Caco-2 (cell line): ENCODE measurements at regions of chr7 and their contacts with region 1.

Region 1: GRCh38 chr7:82044497-82045080 is 274.7 kb upstream of the HGF start:
- DNase-seq: peak in 1 of 2 experiments; percentile 42
- H3K4me3 ChIP-seq: no peak overlapping the region
- H3K4me3 Mint-ChIP-seq: no peak overlapping the region
- H3K27ac Mint-ChIP-seq: no peak overlapping the region
- H3K4me1 ChIP-seq: peaks cover 4% of the 10 kb centered on the region
- H3K4me1 Mint-ChIP-seq: peaks cover 6% of the 10 kb centered on the region
- H3K27me3 ChIP-seq: no peaks in the 10 kb centered on the region
- H3K27me3 Mint-ChIP-seq: peaks cover 9% of the 10 kb centered on the region
- CTCF ChIP-seq: peak; percentile 45 to 74

Region 2: GRCh38 chr7:82164813-82165212 is 120.2 kb after region 1 on chr7:
- CTCF ChIA-PET with region 1: no interaction called
- POLR2A ChIA-PET with region 1: no interaction called
- intact Hi-C with region 1: loop called (anchors 10 kb)
- DNase-seq: no peak
- H3K4me3 ChIP-seq: no peak overlapping the region
- H3K4me3 Mint-ChIP-seq: no peak overlapping the region
- H3K27ac Mint-ChIP-seq: no peak overlapping the region
- H3K4me1 ChIP-seq: no peaks in the 10 kb centered on the region
- H3K4me1 Mint-ChIP-seq: no peaks in the 10 kb centered on the region
- H3K27me3 ChIP-seq: no peaks in the 10 kb centered on the region
- H3K27me3 Mint-ChIP-seq: no peaks in the 10 kb centered on the region
- CTCF ChIP-seq: peak in 1 of 2 experiments; percentile 4

Region 3: DNA sequence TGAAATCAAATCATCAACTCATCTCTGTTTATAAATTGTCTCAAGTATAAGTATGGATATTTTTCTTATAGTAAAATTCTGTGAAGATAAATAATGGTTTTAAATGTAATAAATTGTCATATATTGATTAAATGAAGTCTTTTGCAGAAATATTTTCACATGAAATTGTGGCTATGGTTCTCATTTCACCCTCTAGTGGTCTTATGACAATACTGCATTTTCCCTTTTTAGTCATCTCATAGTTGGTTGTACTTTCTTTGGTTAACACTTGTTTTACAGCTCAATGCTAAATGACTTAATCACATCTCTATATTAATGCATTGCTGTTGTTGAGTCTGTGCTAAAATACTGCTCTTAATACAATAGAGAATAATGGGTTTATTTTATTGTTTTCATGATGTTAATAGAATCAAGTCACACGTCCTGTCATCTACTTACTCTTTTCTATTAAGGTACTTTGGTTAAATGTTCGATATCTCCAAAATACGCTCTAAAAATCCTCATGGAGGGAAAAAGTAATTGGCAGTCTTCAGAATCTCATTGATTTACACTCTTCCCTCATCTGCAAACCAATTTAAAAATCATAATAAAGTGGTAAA is 437.0 kb after region 1 on chr7:
- CTCF ChIA-PET with region 1: no interaction called
- POLR2A ChIA-PET with region 1: no interaction called
- intact Hi-C with region 1: loop called (anchors 1 kb)
- DNase-seq: no peak
- H3K4me3 ChIP-seq: no peak overlapping the region
- H3K4me3 Mint-ChIP-seq: no peak overlapping the region
- H3K27ac Mint-ChIP-seq: no peak overlapping the region
- H3K4me1 ChIP-seq: no peaks in the 10 kb centered on the region
- H3K4me1 Mint-ChIP-seq: no peaks in the 10 kb centered on the region
- H3K27me3 ChIP-seq: no peaks in the 10 kb centered on the region
- H3K27me3 Mint-ChIP-seq: peaks cover 2% of the 10 kb centered on the region
- CTCF ChIP-seq: peak; percentile 63 to 81

Region 4: DNA sequence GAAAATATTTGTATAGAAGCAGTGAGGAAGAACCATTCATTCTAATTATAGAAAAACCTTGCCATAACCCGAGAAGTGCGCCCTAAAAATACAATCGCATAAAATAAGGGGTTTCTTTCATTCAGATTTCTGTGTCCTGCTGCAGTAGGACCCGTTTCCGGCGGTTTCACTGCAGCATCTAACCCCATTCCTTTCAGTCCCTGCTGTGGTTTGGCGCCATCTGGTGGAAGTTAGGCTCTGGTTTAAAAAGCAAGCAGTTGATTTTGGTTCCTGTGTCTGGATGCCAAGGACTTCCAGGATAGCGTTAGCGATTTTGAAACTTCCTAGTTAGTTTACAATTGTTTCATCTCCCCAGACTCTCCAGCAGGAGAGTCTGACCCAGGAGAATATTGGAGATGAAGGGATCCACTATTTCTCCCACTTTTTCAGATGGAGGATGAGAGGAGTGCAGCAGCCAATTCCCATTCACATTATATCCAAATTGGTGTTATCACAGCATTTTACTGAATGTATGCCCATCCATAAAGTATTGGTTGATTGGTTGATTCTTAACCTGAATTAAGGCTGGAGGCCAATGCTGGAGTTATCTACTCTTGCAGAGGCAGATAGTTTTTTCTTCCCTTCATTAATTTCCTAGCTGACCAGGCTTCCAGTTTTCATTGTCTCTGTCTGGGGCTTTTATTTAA is 527.7 kb after region 1 on chr7:
- CTCF ChIA-PET with region 1: no interaction called
- POLR2A ChIA-PET with region 1: no interaction called
- intact Hi-C with region 1: loop called (anchors 1 kb)
- DNase-seq: peak; percentile 80 to 83
- H3K4me3 ChIP-seq: no peak overlapping the region
- H3K4me3 Mint-ChIP-seq: no peak overlapping the region
- H3K27ac Mint-ChIP-seq: no peak overlapping the region
- H3K4me1 ChIP-seq: no peaks in the 10 kb centered on the region
- H3K4me1 Mint-ChIP-seq: no peaks in the 10 kb centered on the region
- H3K27me3 ChIP-seq: no peaks in the 10 kb centered on the region
- H3K27me3 Mint-ChIP-seq: peaks cover 17% of the 10 kb centered on the region
- CTCF ChIP-seq: peak; percentile 85 to 91

Region 5: DNA sequence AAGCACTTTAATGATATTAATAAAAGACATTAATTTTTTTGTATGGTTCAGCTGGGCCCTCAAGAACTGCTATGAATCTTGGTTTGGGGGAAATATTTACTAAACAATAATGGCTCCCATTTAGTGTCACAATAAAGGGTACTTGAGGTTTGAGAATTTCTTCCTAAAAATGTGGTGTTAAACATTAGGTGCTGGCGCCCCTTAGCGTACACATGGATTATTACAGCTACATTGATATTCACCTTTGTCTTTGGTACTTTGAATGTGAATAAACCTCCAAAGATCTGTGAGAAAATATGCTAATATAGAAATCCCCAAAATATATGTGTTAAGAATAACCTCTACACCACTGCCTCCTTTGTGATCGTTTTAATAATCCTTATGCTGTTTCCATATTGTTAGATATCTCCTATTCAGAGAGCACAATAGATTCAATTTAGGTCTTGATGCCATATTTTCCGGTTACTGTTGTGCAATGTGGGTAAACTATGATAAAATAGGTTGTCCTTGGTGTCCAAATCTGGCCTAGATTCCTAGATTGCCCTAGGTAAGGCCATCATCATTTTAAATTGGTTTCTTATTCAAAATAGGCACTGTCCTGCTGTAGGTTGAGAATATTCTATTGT is 560.8 kb after region 1 on chr7:
- CTCF ChIA-PET with region 1: no interaction called
- POLR2A ChIA-PET with region 1: no interaction called
- intact Hi-C with region 1: loop called (anchors 1 kb)
- DNase-seq: peak in 1 of 2 experiments; percentile 10
- H3K4me3 ChIP-seq: no peak overlapping the region
- H3K4me3 Mint-ChIP-seq: no peak overlapping the region
- H3K27ac Mint-ChIP-seq: no peak overlapping the region
- H3K4me1 ChIP-seq: no peaks in the 10 kb centered on the region
- H3K4me1 Mint-ChIP-seq: no peaks in the 10 kb centered on the region
- H3K27me3 ChIP-seq: no peaks in the 10 kb centered on the region
- H3K27me3 Mint-ChIP-seq: no peaks in the 10 kb centered on the region
- CTCF ChIP-seq: peak; percentile 53 to 63